HCT116 (cell line): ENCODE measurements at regions of chr6 and their contacts with region 1.

Region 1: DNA sequence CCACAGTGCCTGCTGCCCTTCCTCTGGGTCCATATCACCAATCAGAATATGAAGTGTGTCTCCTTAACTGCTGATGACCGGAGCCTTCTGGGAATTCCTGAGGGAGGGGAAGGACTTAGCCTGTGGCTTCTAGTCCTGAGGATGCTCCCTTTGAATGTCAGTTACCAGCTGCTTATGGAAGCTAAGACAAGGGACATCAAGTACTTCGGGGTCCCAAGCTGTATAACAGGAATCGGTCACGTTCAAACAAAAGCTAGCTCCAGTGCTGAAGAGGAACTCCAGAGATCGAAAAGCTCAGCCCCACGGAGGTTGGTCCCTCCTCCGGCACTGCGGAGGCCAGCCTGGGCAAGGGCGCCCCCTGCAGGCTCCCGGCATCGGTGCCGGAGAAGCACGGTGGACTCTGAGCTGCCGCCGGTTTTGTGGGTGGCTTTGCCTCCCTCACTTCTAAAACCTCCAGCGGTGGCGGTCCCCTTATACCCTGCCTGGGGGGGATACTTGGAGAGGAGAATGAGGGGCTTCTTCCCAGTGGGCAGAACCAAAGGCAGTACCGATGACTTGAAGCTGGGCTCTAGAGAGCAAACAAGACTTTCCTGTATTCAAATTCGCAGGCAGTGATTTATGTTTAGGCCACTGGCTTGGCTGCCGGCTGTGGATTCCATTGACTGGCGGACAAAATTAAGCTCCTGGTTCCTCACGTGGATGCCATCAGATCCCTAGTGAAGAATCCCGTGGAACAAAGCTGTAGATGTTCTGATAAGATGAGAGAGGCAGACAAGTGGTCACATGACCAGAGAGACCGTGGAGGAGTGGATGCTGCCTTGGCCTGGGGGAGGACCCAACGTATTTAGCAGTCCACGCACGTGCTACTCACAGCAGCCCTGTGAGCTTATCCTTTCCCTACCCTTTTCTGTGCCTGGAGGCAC is 16.2 kb upstream of the UBR2 start:
- DNase-seq: peak; percentile 64
- ATAC-seq: peak; percentile 96
- H3K4me3 ChIP-seq: peak overlapping the region; percentile 55 to 58
- H3K27ac ChIP-seq: peak overlapping the region; percentile 18
- H3K4me1 ChIP-seq: peaks cover 9 to 16% of the 10 kb centered on the region in 2 experiments; a peak in 3 of 4 replicates
- H3K27me3 ChIP-seq: no peaks in the 10 kb centered on the region
- CTCF ChIP-seq: peak; percentile 93 to 99 (median 99)
- POLR2A ChIP-seq: no peak
- RAD21 ChIP-seq: peak; percentile 97

Region 2: GRCh38 chr6:41705996-41706835 is 841.5 kb before region 1 on chr6:
- CTCF ChIA-PET with region 1: no interaction called
- POLR2A ChIA-PET with region 1: no interaction called
- RAD21 ChIA-PET with region 1: no interaction called
- intact Hi-C with region 1: no loop called
- DNase-seq: no peak
- ATAC-seq: peak; percentile 97
- H3K4me3 ChIP-seq: no peak overlapping the region
- H3K27ac ChIP-seq: peak overlapping the region; percentile 40
- H3K4me1 ChIP-seq: peaks cover 0 to 14% of the 10 kb centered on the region in 2 experiments; a peak in 3 of 4 replicates
- H3K27me3 ChIP-seq: no peaks in the 10 kb centered on the region
- CTCF ChIP-seq: peak; percentile 84 to 93 (median 90)
- POLR2A ChIP-seq: no peak
- RAD21 ChIP-seq: peak; percentile 83

Region 3: DNA sequence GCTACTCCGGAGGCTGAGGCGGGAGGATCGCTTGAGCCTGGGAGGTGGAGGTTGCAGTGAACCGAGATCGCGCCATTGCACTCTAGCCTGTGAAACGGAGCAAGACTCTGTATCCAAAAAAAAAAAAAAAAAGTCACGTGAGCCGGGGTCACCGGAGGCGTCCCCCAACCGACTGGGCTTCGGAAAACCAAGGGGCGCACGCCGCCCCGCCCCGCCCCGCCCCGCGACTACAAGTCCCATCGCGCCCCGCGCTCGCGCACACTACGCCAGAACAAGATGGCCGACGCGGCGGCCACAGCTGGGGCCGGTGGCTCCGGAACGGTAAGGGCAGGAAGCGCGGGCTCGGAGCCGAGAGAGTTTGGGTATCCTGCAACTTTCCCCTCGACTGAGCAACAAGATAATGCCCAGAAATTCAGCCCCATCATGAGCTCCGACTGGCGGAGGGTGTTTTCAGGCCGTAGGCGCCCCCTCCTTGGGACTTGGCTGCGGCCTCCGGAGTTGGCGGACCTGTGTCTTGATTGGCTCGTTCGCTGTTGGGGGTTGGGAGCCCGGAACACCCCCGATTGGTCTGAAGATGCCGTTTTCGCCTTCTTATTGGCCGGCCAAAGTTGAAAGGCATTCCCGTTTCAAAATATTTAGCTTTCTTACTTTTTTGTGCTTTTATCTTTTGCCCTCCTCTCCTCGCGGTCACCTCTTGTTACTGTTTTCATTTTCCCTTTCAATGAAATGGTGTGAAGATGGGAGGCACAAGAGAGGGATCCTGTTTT is 497.2 kb before region 1 on chr6 and contains the start of gene TAF8:
- CTCF ChIA-PET with region 1: interaction called, 3 read pairs
- POLR2A ChIA-PET with region 1: no interaction called
- RAD21 ChIA-PET with region 1: no interaction called
- intact Hi-C with region 1: loop called (anchors 10 kb)
- DNase-seq: peak; percentile 82
- ATAC-seq: peak; percentile 90
- H3K4me3 ChIP-seq: peak within 1 kb of the TSS; percentile 69 to 70
- H3K27ac ChIP-seq: peak within 1 kb of the TSS; percentile 78
- H3K4me1 ChIP-seq: peaks cover 32 to 47% of the 10 kb centered on the region in 2 experiments
- H3K27me3 ChIP-seq: no peaks in the 10 kb centered on the region
- CTCF ChIP-seq: no peak
- POLR2A ChIP-seq: peak; percentile 98
- RAD21 ChIP-seq: no peak
- total RNA-seq, gene TAF8: 29.5 TPM

Region 4: GRCh38 chr6:42224222-42224989 is 323.3 kb before region 1 on chr6:
- CTCF ChIA-PET with region 1: interaction called, 12 read pairs
- POLR2A ChIA-PET with region 1: interaction called, 12 read pairs
- RAD21 ChIA-PET with region 1: no interaction called
- intact Hi-C with region 1: loop called (anchors 10 kb)
- DNase-seq: peak; percentile 97
- ATAC-seq: peak; percentile 62
- H3K4me3 ChIP-seq: peak overlapping the region; percentile 23 to 42
- H3K27ac ChIP-seq: peak overlapping the region; percentile 84
- H3K4me1 ChIP-seq: peaks cover 48 to 85% of the 10 kb centered on the region in 2 experiments
- H3K27me3 ChIP-seq: no peaks in the 10 kb centered on the region
- CTCF ChIP-seq: no peak
- POLR2A ChIP-seq: no peak
- RAD21 ChIP-seq: peak; percentile 23

Region 5: DNA sequence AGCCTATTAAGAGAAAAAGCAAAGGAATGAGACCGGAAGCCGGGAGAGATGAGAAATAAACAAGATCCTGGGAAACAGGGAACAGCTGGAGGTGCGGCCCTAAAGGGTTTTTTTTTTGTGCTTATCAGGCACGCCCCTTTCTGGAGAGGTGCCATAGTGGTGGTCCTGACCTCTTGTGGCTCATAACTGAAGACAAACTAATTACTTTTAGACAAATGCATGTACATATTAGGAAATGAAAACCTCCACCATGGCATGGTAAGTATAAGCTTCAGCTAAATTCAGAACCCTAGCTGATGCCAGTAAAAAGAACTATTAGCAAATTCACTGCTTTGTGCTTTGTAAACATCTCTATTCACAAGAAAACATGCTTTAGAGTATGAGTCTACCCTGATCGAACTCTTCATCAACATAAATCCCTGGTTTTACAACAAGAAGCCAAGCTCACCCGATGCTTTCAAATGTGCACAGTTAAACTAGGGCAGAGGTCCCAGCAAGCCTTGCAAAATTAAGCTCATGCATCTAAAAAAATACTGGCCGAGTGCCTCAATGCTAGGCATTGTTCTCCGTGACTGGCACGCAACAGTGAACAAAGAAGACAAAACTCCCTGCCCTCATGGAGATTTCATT is 233.6 kb before region 1 on chr6:
- CTCF ChIA-PET with region 1: interaction called, 18 read pairs
- POLR2A ChIA-PET with region 1: no interaction called
- RAD21 ChIA-PET with region 1: interaction called, 4 read pairs
- intact Hi-C with region 1: loop called (anchors 1 kb)
- DNase-seq: no peak
- ATAC-seq: no peak
- H3K4me3 ChIP-seq: no peak overlapping the region
- H3K27ac ChIP-seq: peak overlapping the region; percentile 53; the same call in 1 of the 2 replicates
- H3K4me1 ChIP-seq: peaks cover 62 to 73% of the 10 kb centered on the region in 2 experiments
- H3K27me3 ChIP-seq: no peaks in the 10 kb centered on the region
- CTCF ChIP-seq: no peak
- POLR2A ChIP-seq: no peak
- RAD21 ChIP-seq: no peak

Region 6: GRCh38 chr6:42532038-42532669 is 15.5 kb before region 1 on chr6:
- CTCF ChIA-PET with region 1: interaction called, 37 read pairs
- POLR2A ChIA-PET with region 1: interaction called, 5 read pairs
- RAD21 ChIA-PET with region 1: no interaction called
- intact Hi-C with region 1: no loop called
- DNase-seq: peak; percentile 79
- ATAC-seq: peak; percentile 96
- H3K4me3 ChIP-seq: no peak overlapping the region
- H3K27ac ChIP-seq: no peak overlapping the region
- H3K4me1 ChIP-seq: no peaks in the 10 kb centered on the region
- H3K27me3 ChIP-seq: no peaks in the 10 kb centered on the region
- CTCF ChIP-seq: peak; percentile 85 to 95 (median 93)
- POLR2A ChIP-seq: no peak
- RAD21 ChIP-seq: peak; percentile 81